Right ventricle myocardium inferior (tissue), 1 donor: ENCODE measurements at regions of chr5 and their contacts with region 1.

Region 1: GRCh38 chr5:81851481-81852178 is 100.7 kb upstream of the SSBP2 start:
- DNase-seq: peak; percentile 98
- ATAC-seq: peak; percentile 93

Region 2: DNA sequence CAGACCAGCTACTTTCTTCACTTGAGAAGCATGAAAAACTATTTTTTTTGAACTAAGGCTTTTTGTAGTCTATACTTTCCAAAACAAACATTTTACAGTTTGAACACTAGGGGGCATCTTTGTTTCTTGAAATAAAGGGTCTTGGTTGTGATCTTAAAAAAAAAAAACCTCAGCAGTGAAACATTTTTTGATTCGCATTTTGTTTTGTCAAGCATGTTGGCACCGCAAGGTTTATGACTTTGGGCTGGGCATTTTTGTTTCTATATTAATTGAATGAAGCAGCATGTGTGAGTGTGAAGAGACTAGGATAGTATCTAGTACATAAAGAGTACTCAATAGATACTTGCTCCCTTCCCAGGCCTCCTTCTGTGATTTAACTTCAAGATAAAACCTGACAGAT is 426.1 kb before region 1 on chr5:
- intact Hi-C with region 1: loop called (anchors 5 kb)
- DNase-seq: no peak
- ATAC-seq: no peak

Region 3: DNA sequence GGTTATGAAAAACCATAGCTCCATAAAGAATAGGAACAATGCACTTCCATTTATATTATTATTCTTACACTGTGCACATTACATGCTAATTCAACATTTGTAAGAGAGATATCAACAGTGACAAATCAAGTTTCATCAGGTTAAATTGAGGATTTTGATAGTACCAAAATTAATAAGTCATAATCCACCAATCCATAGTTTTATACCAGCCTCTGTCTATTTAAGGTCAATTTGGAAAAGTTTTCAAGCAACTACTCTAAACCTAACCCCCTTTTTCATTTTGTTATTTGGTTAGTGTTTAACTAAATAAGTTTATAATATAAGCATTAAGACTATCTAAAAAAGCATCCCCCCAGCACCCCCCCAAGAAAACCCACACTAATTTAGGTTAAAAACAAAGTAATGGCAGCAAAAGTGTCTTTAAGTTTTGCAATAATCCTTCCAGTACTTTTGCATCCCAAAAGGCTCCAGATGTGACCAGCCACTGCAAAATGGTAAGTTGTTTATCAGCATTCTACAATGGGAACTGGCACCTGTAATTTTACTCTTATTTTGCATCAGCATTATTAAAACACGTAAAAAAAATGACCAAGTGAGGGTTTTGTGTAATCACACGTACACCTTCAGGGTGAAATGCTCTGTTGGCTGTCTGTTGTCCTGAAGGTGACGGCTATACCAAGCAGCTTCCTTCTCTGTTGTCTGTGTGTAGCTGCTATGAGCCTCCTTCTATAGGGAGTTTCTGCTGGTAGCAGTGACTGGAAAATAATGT is 64.0 kb before region 1 on chr5:
- intact Hi-C with region 1: loop called (anchors 1 kb)
- DNase-seq: no peak
- ATAC-seq: peak; percentile 71